GM12878 (cell line): ENCODE measurements at regions of chr15 and their contacts with region 1.

Region 1: GRCh38 chr15:36186376-36186775 is 393.1 kb upstream of the CDIN1 start:
- DNase-seq: no peak
- ATAC-seq: no peak
- H3K4me3 ChIP-seq: no peak overlapping the region
- H3K27ac ChIP-seq: no peak overlapping the region
- H3K4me1 ChIP-seq: no peaks in the 10 kb centered on the region
- H3K27me3 ChIP-seq: no peaks in the 10 kb centered on the region
- CTCF ChIP-seq: no peak
- EP300 ChIP-seq: no peak
- POLR2A ChIP-seq: no peak
- RAD21 ChIP-seq: no peak

Region 2: DNA sequence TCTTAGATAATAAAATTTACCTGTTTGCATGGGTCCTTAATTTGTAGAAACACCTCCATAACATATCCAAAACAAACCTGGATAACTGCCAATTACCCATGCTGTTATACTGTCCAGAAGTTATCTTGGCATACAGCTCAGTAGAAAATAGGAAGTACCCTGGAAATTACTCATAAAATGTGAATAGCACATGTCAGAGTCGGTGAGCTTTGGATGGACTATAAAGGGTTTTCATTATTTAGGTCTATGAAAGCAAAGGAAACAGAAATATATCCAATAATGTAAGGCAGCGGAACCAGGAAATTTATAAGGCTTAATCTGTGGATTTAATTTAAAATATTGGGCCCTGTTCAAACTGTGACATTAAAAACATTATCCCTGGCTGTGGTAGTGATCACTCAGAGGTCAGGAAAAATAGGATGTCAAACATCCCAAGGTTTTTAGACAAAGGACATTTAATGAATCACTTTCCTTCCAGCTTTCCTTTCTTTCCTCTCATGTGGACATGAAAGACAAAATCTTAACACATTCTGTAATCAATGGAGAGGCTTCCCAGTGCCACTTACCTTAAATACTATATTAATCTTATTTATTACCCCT is 181.4 kb before region 1 on chr15:
- CTCF ChIA-PET with region 1: no interaction called
- POLR2A ChIA-PET with region 1: no interaction called
- RAD21 ChIA-PET with region 1: no interaction called
- SMC1A ChIA-PET with region 1: no interaction called
- in situ Hi-C with region 1: no loop called
- intact Hi-C with region 1: no loop called
- DNase-seq: no peak
- ATAC-seq: no peak
- H3K4me3 ChIP-seq: no peak overlapping the region
- H3K27ac ChIP-seq: no peak overlapping the region
- H3K4me1 ChIP-seq: no peaks in the 10 kb centered on the region
- H3K27me3 ChIP-seq: no peaks in the 10 kb centered on the region
- CTCF ChIP-seq: no peak
- EP300 ChIP-seq: no peak
- POLR2A ChIP-seq: no peak
- RAD21 ChIP-seq: no peak

Region 3: DNA sequence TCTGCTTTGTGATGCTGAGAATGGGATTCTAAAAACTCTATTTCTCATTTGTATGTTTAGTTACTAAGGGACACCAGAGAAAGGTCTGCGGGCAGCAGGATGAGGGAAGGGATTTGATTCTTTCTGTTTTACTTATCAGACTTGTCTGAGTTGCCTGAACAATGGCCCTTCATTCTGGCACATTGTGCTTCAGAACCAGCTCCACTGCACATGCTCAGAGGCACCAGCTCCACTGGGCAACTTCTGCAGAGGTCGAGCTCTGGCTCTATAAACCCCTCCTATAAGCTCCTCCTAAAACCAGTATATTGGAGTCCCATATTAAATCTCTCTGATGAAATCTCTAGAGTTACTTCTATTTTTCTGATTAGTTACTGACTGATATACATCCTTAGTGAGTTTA is 60.2 kb before region 1 on chr15:
- CTCF ChIA-PET with region 1: no interaction called
- POLR2A ChIA-PET with region 1: no interaction called
- RAD21 ChIA-PET with region 1: no interaction called
- SMC1A ChIA-PET with region 1: no interaction called
- in situ Hi-C with region 1: no loop called
- intact Hi-C with region 1: loop called (anchors 10 kb)
- DNase-seq: no peak
- ATAC-seq: no peak
- H3K4me3 ChIP-seq: no peak overlapping the region
- H3K27ac ChIP-seq: no peak overlapping the region
- H3K4me1 ChIP-seq: no peaks in the 10 kb centered on the region
- H3K27me3 ChIP-seq: no peaks in the 10 kb centered on the region
- CTCF ChIP-seq: no peak
- EP300 ChIP-seq: no peak
- POLR2A ChIP-seq: no peak
- RAD21 ChIP-seq: no peak

Region 4: DNA sequence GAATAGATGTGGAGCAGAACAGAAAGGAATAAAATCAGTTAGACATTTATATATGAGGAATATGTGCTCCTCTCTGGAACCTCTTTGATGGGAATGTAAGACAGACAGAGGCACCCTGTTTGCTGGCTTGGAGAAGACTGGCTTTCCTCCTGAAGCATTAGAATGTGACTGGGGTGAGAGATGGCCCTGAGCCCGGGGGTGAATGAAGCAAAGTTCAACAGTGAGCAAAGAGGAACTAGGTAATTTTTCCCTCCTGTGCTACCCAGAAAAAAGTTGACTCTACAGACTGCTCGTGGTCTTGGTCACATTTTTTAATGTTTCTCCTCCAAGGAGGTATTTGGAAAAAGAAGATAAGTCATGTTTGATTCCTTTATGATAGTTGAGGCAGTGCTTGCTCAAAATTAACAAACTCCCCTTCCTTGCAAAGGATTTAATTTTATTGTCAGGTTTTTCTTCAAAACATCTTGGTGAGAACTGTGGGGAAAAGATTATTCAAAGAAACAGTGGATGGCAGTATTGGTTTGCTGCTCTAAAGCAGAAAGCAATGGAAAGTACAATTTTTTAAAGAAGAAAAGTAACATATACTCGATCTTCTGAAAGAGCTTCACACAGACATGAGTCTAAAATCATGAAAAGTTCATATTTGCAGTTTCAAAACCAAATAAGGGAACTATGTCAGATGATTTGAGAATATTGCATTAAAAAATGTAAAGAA is 22.6 kb after region 1 on chr15:
- CTCF ChIA-PET with region 1: no interaction called
- POLR2A ChIA-PET with region 1: no interaction called
- RAD21 ChIA-PET with region 1: no interaction called
- SMC1A ChIA-PET with region 1: no interaction called
- in situ Hi-C with region 1: no loop called
- intact Hi-C with region 1: no loop called
- DNase-seq: no peak
- ATAC-seq: no peak
- H3K4me3 ChIP-seq: no peak overlapping the region
- H3K27ac ChIP-seq: no peak overlapping the region
- H3K4me1 ChIP-seq: no peaks in the 10 kb centered on the region
- H3K27me3 ChIP-seq: no peaks in the 10 kb centered on the region
- CTCF ChIP-seq: no peak
- EP300 ChIP-seq: no peak
- POLR2A ChIP-seq: no peak
- RAD21 ChIP-seq: no peak